ENCODE measurements at regions of chr6 and their contacts with region 1.

Region 1: GRCh38 chr6:52419809-52420670 is at the start of gene EFHC1:
- DNase-seq: peak; percentile 94
- H3K4me3 ChIP-seq: peak within 1 kb of the TSS; percentile 78 to 88
- H3K27ac ChIP-seq: peak within 1 kb of the TSS; percentile 93 to 97
- H3K4me1 ChIP-seq: peaks cover 23 to 54% of the 10 kb centered on the region in 2 experiments
- H3K27me3 ChIP-seq: no peaks in the 10 kb centered on the region
- CTCF ChIP-seq: no peak
- EP300 ChIP-seq: no peak
- RAD21 ChIP-seq: no peak
- polyA plus RNA-seq, gene EFHC1: 39.4 and 54.3 TPM in 2 replicates

Region 2: GRCh38 chr6:52399511-52400312 is 20.3 kb before region 1 on chr6:
- CTCF ChIA-PET with region 1: interaction called, 12 read pairs
- POLR2A ChIA-PET with region 1: interaction called, 4 read pairs
- DNase-seq: peak; percentile 70
- H3K4me3 ChIP-seq: no peak overlapping the region; a peak in 1 of 4 replicates
- H3K27ac ChIP-seq: no peak overlapping the region; a peak in 1 of 4 replicates
- H3K4me1 ChIP-seq: peaks cover 6 to 16% of the 10 kb centered on the region in 2 experiments; a peak in 2 of 4 replicates
- H3K27me3 ChIP-seq: no peaks in the 10 kb centered on the region
- CTCF ChIP-seq: peak; percentile 89
- EP300 ChIP-seq: no peak
- RAD21 ChIP-seq: peak; percentile 91

Region 3: DNA sequence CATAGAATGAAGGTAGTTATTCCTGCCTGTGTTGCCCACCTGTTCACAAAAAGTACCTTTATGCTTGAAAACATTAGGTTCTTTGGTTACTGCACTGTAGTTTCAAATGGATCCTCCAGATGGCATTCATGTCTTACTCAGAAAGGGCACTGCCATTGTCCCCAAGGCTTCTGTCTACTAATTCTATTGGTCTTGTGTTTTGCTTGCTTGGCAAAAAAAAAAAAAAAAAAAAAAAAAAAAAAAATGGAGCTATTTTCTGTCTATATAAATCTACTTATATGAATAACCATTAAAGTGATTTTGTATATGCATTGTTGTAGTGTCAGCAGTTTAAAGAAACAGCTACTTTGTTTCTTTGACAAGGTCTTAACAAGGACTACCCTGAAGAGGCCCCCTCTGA is 12.6 kb before region 1 on chr6:
- CTCF ChIA-PET with region 1: interaction called, 17 read pairs
- POLR2A ChIA-PET with region 1: no interaction called
- DNase-seq: peak; percentile 65
- H3K4me3 ChIP-seq: no peak overlapping the region
- H3K27ac ChIP-seq: no peak overlapping the region
- H3K4me1 ChIP-seq: peaks cover 0 to 11% of the 10 kb centered on the region in 2 experiments; a peak in 1 of 4 replicates
- H3K27me3 ChIP-seq: no peaks in the 10 kb centered on the region
- CTCF ChIP-seq: peak; percentile 68
- EP300 ChIP-seq: no peak
- RAD21 ChIP-seq: peak; percentile 85

Region 4: GRCh38 chr6:52590152-52590931 is 170.3 kb after region 1 on chr6:
- CTCF ChIA-PET with region 1: interaction called, 21 read pairs
- POLR2A ChIA-PET with region 1: interaction called, 6 read pairs
- DNase-seq: peak; percentile 69
- H3K4me3 ChIP-seq: no peak overlapping the region
- H3K27ac ChIP-seq: peak overlapping the region in 1 of 2 experiments; percentile 97; a peak in 2 of 4 replicates
- H3K4me1 ChIP-seq: peaks cover 26 to 66% of the 10 kb centered on the region in 2 experiments
- H3K27me3 ChIP-seq: no peaks in the 10 kb centered on the region
- CTCF ChIP-seq: peak; percentile 37
- EP300 ChIP-seq: peak in 1 of 2 experiments; percentile 80; a peak in 1 of 4 replicates
- RAD21 ChIP-seq: peak; percentile 48

Region 5: GRCh38 chr6:52598123-52598823 is 178.2 kb after region 1 on chr6:
- CTCF ChIA-PET with region 1: interaction called, 27 read pairs
- POLR2A ChIA-PET with region 1: interaction called, 6 read pairs
- DNase-seq: peak; percentile 74
- H3K4me3 ChIP-seq: peak overlapping the region; percentile 17 to 34; a peak in 2 of 4 replicates
- H3K27ac ChIP-seq: peak overlapping the region; percentile 86 to 97
- H3K4me1 ChIP-seq: peaks cover 47 to 49% of the 10 kb centered on the region in 2 experiments
- H3K27me3 ChIP-seq: no peaks in the 10 kb centered on the region
- CTCF ChIP-seq: peak; percentile 80
- EP300 ChIP-seq: peak in 1 of 2 experiments; percentile 58; a peak in 2 of 4 replicates
- RAD21 ChIP-seq: peak; percentile 81

Region 6: DNA sequence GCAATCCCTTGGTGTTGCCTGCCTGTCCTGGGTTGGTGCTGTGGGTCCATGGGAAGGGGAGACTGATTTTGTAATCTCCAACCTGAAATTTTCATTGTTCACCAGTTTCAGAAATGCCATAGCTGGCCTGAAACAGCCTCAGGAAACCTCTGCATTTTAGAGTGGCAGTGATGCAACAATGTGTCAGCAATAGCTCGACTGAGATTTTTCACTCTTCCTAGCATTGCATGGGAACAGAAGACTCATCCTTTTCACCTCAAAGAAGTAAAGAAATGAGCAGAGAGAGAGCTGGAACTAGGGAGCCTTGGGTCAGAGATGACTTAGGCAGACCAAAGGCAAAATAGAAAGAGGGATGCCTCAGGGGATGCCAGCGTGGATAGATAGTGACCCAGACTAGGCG is 227.2 kb after region 1 on chr6:
- CTCF ChIA-PET with region 1: interaction called, 13 read pairs
- POLR2A ChIA-PET with region 1: interaction called, 4 read pairs
- DNase-seq: no peak
- H3K4me3 ChIP-seq: no peak overlapping the region
- H3K27ac ChIP-seq: no peak overlapping the region
- H3K4me1 ChIP-seq: peaks cover 3 to 15% of the 10 kb centered on the region in 2 experiments; a peak in 3 of 4 replicates
- H3K27me3 ChIP-seq: no peaks in the 10 kb centered on the region
- CTCF ChIP-seq: no peak
- EP300 ChIP-seq: no peak
- RAD21 ChIP-seq: no peak